OCI-LY7 (cell line): ENCODE measurements at regions of chr3 and their contacts with region 1.

Region 1: GRCh38 chr3:23377928-23378672 is 175.0 kb downstream of the UBE2E2 start:
- DNase-seq: peak; percentile 60
- H3K4me3 ChIP-seq: peak overlapping the region; percentile 46
- H3K27ac ChIP-seq: peak overlapping the region; percentile 79
- H3K4me1 ChIP-seq: peaks cover 72% of the 10 kb centered on the region
- CTCF ChIP-seq: no peak

Region 2: DNA sequence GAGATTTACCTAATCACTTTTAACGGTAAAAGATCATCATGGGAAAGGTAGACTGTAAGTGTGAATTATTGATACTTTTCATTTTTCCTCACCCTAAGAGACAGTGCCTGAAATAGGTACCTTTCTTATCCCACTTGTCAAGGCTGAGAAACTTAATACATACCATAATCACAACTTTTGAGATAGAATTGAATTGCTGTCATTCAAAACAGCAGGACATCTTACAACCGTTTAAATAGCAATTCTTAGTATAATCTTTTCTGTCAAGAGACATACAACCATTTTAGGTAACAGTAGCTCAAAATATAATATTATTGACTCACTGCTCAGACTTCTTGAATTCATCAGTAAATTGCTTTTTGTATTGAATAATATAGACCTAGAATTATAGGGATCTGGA is 164.3 kb before region 1 on chr3:
- CTCF ChIA-PET with region 1: no interaction called
- POLR2A ChIA-PET with region 1: no interaction called
- intact Hi-C with region 1: no loop called
- DNase-seq: no peak
- H3K4me3 ChIP-seq: no peak overlapping the region
- H3K27ac ChIP-seq: no peak overlapping the region
- H3K4me1 ChIP-seq: peaks cover 36% of the 10 kb centered on the region
- CTCF ChIP-seq: no peak

Region 3: GRCh38 chr3:23365066-23365465 is 13.0 kb before region 1 on chr3:
- CTCF ChIA-PET with region 1: no interaction called
- POLR2A ChIA-PET with region 1: interaction called, 30 read pairs
- intact Hi-C with region 1: no loop called
- DNase-seq: no peak
- H3K4me3 ChIP-seq: no peak overlapping the region
- H3K27ac ChIP-seq: no peak overlapping the region
- H3K4me1 ChIP-seq: peaks cover 35% of the 10 kb centered on the region
- CTCF ChIP-seq: no peak